ENCODE measurements at regions of chr7 and their contacts with region 1.

Region 1: GRCh38 chr7:101924171-101924570 is 106.7 kb downstream of the CUX1 start:
- DNase-seq: peak; percentile 86
- ATAC-seq: peak; percentile 71
- H3K4me3 ChIP-seq: no peak overlapping the region
- H3K27ac ChIP-seq: peak overlapping the region; percentile 16
- H3K4me1 ChIP-seq: peaks cover 20% of the 10 kb centered on the region
- H3K27me3 ChIP-seq: no peaks in the 10 kb centered on the region
- CTCF ChIP-seq: no peak
- POLR2A ChIP-seq: peak; percentile 50; the same call in 1 of the 2 replicates
- RAD21 ChIP-seq: no peak

Region 2: DNA sequence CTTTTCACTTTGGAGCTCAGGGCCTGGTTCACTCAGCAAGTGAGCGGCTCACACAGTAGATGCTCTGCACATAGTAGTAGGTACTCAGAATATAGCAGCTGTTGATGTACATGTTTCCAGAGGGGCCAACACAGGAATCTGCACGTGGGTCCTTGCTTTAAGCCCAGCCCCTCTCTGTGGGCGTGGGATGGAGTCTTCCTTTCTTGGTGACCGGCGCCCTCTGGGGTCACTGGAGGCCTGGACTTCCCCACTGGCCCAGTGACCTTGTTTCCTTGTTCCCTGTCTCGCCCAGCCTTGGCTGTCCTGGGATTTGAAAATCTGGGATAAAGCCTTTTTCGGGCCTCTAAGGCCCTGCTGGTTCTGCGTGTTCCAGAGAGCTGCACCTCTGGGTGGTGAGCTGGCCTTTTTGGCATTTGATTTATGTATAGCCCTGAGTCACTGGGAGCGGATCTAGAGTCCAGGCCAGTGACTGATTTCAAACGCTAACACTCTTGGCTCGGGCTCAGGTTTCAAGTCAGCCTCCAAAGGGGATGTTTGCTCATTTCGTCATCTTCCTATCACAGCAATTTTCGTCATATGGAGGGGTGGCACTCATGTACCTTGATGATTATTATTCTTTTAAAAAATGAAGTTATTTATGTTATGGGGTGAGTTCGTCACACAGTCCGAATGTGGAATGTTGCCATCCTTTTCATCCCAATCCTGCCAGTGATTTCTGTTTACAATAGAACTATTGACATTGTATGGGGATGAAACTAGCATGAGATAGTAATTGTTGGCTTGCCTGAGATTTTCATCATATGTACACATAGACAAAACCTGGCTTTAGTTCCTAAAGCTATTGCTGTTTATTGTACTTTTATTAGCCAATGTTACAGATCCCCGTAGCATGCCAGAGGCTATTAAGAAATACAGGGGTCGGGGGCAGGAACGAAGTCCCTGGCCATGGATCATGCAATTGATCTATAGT is 41.3 kb before region 1 on chr7:
- CTCF ChIA-PET with region 1: no interaction called
- POLR2A ChIA-PET with region 1: no interaction called
- dilution Hi-C with region 1: no loop called
- in situ Hi-C with region 1: no loop called
- intact Hi-C with region 1: loop called (anchors 5 kb)
- DNase-seq: peak; percentile 100
- ATAC-seq: peak; percentile 88
- H3K4me3 ChIP-seq: no peak overlapping the region
- H3K27ac ChIP-seq: peak overlapping the region; percentile 93
- H3K4me1 ChIP-seq: peaks cover 27% of the 10 kb centered on the region
- H3K27me3 ChIP-seq: no peaks in the 10 kb centered on the region
- CTCF ChIP-seq: no peak
- POLR2A ChIP-seq: peak; percentile 40; the same call in 1 of the 2 replicates
- RAD21 ChIP-seq: peak; percentile 28

Region 3: DNA sequence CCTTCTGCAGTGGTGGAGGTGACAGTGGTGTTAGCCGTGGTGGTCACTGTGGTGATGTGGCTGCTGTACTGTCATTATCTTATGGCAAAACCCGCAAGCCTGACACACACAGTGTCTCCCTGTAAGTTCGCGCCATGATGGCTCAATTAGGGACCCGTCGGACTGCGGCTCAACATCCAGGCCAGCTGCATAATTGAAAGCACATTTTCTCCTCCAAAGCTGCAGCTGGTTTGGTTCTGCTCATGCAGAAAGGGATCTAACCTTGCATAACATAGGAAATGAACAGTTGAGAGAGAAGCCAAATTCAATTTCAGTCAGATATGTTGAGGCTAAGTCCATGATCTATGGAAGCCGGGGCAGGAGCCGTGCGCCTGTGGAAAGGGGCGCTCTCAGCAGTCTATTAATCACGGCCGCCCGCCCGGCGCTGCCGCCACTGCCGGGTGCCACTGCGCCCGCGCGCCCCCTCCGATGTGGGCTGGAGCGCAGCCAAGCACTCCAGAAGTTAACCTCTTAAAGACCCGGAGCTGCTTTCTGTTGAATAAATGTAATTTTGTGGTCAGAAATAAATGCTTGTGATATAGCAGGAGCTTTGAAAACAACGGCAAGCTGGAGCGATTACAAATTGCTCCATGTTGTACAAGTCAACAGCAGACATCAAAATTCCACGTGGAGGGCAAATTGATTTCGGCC is 121.0 kb after region 1 on chr7:
- CTCF ChIA-PET with region 1: no interaction called
- POLR2A ChIA-PET with region 1: no interaction called
- dilution Hi-C with region 1: no loop called
- in situ Hi-C with region 1: no loop called
- intact Hi-C with region 1: loop called (anchors 10 kb)
- DNase-seq: peak; percentile 93
- ATAC-seq: peak; percentile 90
- H3K4me3 ChIP-seq: no peak overlapping the region
- H3K27ac ChIP-seq: peak overlapping the region; percentile 41
- H3K4me1 ChIP-seq: peaks cover 18% of the 10 kb centered on the region
- H3K27me3 ChIP-seq: no peaks in the 10 kb centered on the region
- CTCF ChIP-seq: no peak
- POLR2A ChIP-seq: no peak
- RAD21 ChIP-seq: no peak